ENCODE measurements at regions of chr20 and their contacts with region 1.

Region 1: DNA sequence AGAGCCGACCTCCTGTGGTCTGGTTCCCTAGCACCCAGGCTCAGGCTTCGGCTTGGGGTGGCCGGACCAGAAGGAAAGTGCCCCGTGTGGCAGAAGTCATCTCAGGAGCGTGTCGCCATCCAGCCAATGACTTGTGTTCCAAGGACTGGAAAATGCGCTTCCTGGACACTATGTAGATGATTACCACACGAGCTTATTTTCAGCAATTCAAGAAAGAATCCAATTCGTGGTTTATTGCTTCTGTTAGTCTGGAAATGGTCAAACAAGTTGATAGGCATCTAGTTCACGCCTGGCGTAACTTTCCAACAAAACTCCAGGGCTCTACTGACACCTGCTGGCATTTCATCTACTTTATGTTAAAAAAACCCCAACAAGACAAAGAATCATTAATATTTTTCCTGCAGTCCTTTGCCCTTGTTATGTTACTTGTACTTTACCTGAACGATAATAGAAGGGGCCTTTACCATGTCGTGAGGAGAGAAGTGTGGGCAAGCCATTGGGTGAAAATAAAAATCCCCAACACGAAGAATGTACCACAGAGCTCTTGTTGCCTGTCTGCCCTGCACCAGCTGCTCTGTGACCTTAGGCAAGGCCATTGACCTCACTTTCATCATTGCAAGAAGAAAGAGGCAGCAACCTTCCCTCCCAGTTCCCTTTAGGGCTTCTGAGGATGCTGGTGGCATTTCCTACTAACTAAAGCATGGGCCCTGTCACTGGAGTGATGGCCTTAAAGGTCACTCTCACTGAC is 154.7 kb upstream of the LAMP5 start:
- DNase-seq: peak; percentile 70
- ATAC-seq: peak; percentile 54
- H3K4me3 ChIP-seq: no peak overlapping the region
- H3K27ac ChIP-seq: no peak overlapping the region
- H3K4me1 ChIP-seq: peaks cover 5% of the 10 kb centered on the region
- H3K27me3 ChIP-seq: no peaks in the 10 kb centered on the region
- CTCF ChIP-seq: peak; percentile 61
- POLR2A ChIP-seq: no peak
- RAD21 ChIP-seq: peak; percentile 77

Region 2: GRCh38 chr20:8244637-8245036 is 1115.1 kb before region 1 on chr20:
- CTCF ChIA-PET with region 1: no interaction called
- POLR2A ChIA-PET with region 1: no interaction called
- dilution Hi-C with region 1: no loop called
- in situ Hi-C with region 1: no loop called
- intact Hi-C with region 1: no loop called
- DNase-seq: peak; percentile 67
- ATAC-seq: peak; percentile 14; the same call in 1 of the 2 replicates
- H3K4me3 ChIP-seq: no peak overlapping the region
- H3K27ac ChIP-seq: no peak overlapping the region
- H3K4me1 ChIP-seq: 0 out of 2 replicates have a peak, but pooled peaks cover 2% of the 10 kb centered on the region
- H3K27me3 ChIP-seq: no peaks in the 10 kb centered on the region
- CTCF ChIP-seq: no peak
- POLR2A ChIP-seq: no peak
- RAD21 ChIP-seq: no peak

Region 3: GRCh38 chr20:8756410-8756809 is 603.3 kb before region 1 on chr20:
- CTCF ChIA-PET with region 1: interaction called, 3 read pairs
- POLR2A ChIA-PET with region 1: no interaction called
- dilution Hi-C with region 1: loop called (anchors 25 kb)
- in situ Hi-C with region 1: loop called (anchors 10 kb)
- intact Hi-C with region 1: loop called (anchors 1 kb)
- DNase-seq: peak; percentile 96
- ATAC-seq: peak; percentile 82
- H3K4me3 ChIP-seq: no peak overlapping the region
- H3K27ac ChIP-seq: no peak overlapping the region
- H3K4me1 ChIP-seq: peaks cover 11% of the 10 kb centered on the region
- H3K27me3 ChIP-seq: no peaks in the 10 kb centered on the region
- CTCF ChIP-seq: no peak
- POLR2A ChIP-seq: no peak
- RAD21 ChIP-seq: no peak

Region 4: DNA sequence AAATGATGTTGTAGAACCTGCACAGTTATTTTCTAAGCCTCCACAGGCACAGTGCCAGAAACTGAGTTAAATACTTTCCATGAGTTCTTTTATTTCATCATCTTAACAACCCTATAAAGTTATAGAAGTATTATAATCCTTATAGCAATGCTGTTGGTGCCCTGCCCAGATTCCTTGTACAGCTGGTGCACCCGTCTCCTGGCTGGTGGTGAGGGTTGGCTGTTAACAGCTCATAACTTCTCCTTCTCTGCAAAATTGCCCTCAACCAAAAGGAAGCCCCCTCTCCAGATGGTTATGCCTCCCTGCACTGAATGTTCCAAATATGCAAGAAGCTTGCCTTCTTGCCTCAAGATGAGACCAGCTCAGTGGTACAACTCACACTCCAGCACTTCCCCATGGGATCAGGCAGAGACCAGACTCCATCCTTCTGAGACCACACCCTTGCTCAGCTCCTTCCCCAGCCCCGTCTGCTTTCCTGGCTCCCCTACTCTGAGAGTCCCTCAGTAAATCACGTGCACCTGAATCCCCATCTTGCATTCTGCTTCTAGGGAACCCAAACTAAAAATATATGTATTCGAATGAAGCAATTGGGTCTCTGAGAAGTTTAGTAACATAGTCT is 595.3 kb before region 1 on chr20:
- CTCF ChIA-PET with region 1: interaction called, 3 read pairs
- POLR2A ChIA-PET with region 1: no interaction called
- dilution Hi-C with region 1: loop called (anchors 25 kb)
- in situ Hi-C with region 1: loop called (anchors 10 kb)
- intact Hi-C with region 1: loop called (anchors 1 kb)
- DNase-seq: no peak
- ATAC-seq: peak; percentile 19; the same call in 1 of the 2 replicates
- H3K4me3 ChIP-seq: no peak overlapping the region
- H3K27ac ChIP-seq: no peak overlapping the region
- H3K4me1 ChIP-seq: peaks cover 6% of the 10 kb centered on the region
- H3K27me3 ChIP-seq: no peaks in the 10 kb centered on the region
- CTCF ChIP-seq: no peak
- POLR2A ChIP-seq: no peak
- RAD21 ChIP-seq: no peak

Region 5: DNA sequence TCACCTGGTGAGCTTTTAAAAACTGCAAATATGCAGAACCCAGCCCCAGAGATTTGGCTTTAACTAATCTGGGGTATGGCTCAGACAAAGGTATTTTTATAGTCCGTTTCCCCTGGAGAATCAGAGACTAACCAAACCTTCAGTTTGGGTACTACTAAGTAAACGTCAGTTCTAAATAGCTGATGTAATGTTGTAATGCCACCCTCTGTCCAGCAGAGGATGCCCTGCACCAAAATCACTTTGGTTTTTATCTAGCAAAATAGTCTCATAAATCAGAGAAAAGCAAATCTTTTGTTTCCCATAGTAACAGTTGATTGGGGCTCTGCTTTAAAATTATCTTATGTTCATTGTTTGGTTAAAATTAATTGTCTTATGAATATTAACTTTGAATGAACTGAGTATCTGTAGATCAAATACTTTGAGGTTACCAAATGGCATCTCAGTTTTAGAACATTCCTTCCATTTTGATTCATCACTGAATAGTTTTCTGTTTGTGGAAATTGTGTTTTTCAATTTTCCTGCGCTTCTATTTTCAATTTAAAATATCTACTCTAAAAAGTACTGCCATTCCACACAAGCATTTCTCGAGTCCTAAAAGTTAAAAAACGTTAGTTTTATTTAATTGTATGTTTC is 569.2 kb before region 1 on chr20:
- CTCF ChIA-PET with region 1: interaction called, 3 read pairs
- POLR2A ChIA-PET with region 1: no interaction called
- dilution Hi-C with region 1: no loop called
- in situ Hi-C with region 1: no loop called
- intact Hi-C with region 1: loop called (anchors 1 kb)
- DNase-seq: peak; percentile 60
- ATAC-seq: peak; percentile 90
- H3K4me3 ChIP-seq: no peak overlapping the region
- H3K27ac ChIP-seq: no peak overlapping the region
- H3K4me1 ChIP-seq: no peaks in the 10 kb centered on the region
- H3K27me3 ChIP-seq: no peaks in the 10 kb centered on the region
- CTCF ChIP-seq: peak; percentile 95
- POLR2A ChIP-seq: no peak
- RAD21 ChIP-seq: peak; percentile 90

Region 6: GRCh38 chr20:9035129-9035528 is 324.6 kb before region 1 on chr20:
- CTCF ChIA-PET with region 1: no interaction called
- POLR2A ChIA-PET with region 1: no interaction called
- dilution Hi-C with region 1: no loop called
- in situ Hi-C with region 1: no loop called
- intact Hi-C with region 1: no loop called
- DNase-seq: peak; percentile 94
- ATAC-seq: peak; percentile 86
- H3K4me3 ChIP-seq: no peak overlapping the region
- H3K27ac ChIP-seq: no peak overlapping the region; the same call in 1 of the 2 replicates
- H3K4me1 ChIP-seq: peaks cover 13% of the 10 kb centered on the region
- H3K27me3 ChIP-seq: no peaks in the 10 kb centered on the region
- CTCF ChIP-seq: no peak
- POLR2A ChIP-seq: no peak
- RAD21 ChIP-seq: 0 out of 2 replicates have a peak, but pooled peaks have one; percentile 18

Region 7: GRCh38 chr20:9185511-9185910 is 174.2 kb before region 1 on chr20:
- CTCF ChIA-PET with region 1: no interaction called
- POLR2A ChIA-PET with region 1: no interaction called
- dilution Hi-C with region 1: no loop called
- in situ Hi-C with region 1: no loop called
- intact Hi-C with region 1: no loop called
- DNase-seq: peak; percentile 89
- ATAC-seq: peak; percentile 97
- H3K4me3 ChIP-seq: no peak overlapping the region
- H3K27ac ChIP-seq: peak overlapping the region; percentile 27
- H3K4me1 ChIP-seq: peaks cover 10% of the 10 kb centered on the region
- H3K27me3 ChIP-seq: no peaks in the 10 kb centered on the region
- CTCF ChIP-seq: no peak
- POLR2A ChIP-seq: no peak
- RAD21 ChIP-seq: peak; percentile 17; the same call in 1 of the 2 replicates

Region 8: GRCh38 chr20:9500121-9500520 is 140.4 kb after region 1 on chr20:
- CTCF ChIA-PET with region 1: no interaction called
- POLR2A ChIA-PET with region 1: no interaction called
- dilution Hi-C with region 1: no loop called
- in situ Hi-C with region 1: no loop called
- intact Hi-C with region 1: no loop called
- DNase-seq: peak; percentile 16
- ATAC-seq: no peak
- H3K4me3 ChIP-seq: no peak overlapping the region
- H3K27ac ChIP-seq: no peak overlapping the region
- H3K4me1 ChIP-seq: no peaks in the 10 kb centered on the region
- H3K27me3 ChIP-seq: peaks cover 13% of the 10 kb centered on the region
- CTCF ChIP-seq: no peak
- POLR2A ChIP-seq: no peak
- RAD21 ChIP-seq: no peak

Measured in IMR-90 (cell line).